ENCODE measurements at regions of chr10 and their contacts with region 1.

Region 1: DNA sequence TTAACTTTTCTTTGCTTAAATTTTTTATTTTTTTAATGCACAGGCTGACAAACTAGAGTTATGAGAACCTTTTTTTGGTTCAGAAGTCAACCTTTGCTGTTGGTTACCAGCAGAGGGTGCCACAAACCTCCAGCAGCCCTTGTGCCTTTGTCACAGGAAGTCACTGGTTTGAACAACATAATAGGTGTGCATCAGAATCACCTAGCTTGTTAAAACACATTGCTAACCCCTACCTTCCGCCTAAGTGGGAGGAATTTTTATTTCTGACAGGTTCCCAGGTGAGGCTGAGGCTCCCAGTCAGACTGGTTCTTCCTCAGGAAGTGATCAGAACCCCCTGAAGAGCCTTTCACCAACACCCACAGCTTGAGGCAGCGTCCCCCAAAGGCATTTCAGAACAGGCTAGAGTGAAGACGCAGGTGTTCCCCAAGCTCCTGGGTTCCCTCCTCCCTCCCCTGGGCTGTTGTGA is 22.6 kb upstream of the VDAC2 start:
- DNase-seq: peak; percentile 53
- H3K4me3 Mint-ChIP-seq: no peak overlapping the region
- H3K27ac Mint-ChIP-seq: peak overlapping the region; percentile 23
- H3K4me1 Mint-ChIP-seq: peaks cover 5% of the 10 kb centered on the region
- H3K27me3 Mint-ChIP-seq: no peaks in the 10 kb centered on the region

Region 2: GRCh38 chr10:75137533-75138438 is 50.2 kb before region 1 on chr10:
- intact Hi-C with region 1: loop called (anchors 5 kb)
- DNase-seq: no peak
- H3K4me3 Mint-ChIP-seq: no peak overlapping the region
- H3K27ac Mint-ChIP-seq: peak overlapping the region; percentile 20
- H3K4me1 Mint-ChIP-seq: peaks cover 27% of the 10 kb centered on the region
- H3K27me3 Mint-ChIP-seq: no peaks in the 10 kb centered on the region

Region 3: DNA sequence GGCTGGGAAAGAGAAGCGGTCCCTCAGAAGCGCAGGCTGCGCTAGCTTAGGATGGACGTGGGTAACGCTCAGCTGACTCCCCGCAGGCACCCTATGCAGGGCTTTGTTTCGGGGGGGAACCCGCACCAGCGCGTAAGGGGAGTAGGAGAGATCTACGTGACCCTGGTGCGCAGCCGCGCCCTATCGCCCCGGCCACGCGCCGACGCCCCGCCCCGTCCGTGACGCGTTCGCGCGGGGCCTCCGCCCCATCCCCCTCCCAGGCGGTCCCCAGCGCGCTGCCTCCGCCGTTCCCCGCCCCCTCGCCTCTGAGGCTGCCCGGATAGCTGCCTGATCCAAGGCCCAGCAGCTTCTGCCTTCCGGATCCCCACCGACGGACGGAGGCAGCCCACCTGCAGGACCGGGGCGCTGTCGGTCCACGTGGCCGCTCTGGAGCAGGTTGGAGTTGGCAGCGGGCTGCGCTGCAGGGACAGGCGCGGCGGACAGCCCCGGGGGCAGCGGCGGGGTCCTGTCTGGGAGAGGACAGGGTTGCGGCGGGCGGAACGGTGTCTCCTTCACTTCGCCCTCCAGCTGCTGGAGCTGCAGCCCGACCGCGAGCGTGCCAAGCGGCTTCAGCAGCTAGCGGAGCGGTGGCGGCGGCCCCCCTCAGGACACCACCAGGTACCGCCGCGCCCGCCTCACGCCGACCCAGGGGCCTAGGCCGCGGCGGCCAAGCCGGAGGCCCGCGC is 22.4 kb after region 1 on chr10 and contains the start of gene VDAC2:
- intact Hi-C with region 1: loop called (anchors 1 kb)
- DNase-seq: peak; percentile 95
- H3K4me3 Mint-ChIP-seq: peak within 1 kb of the TSS; percentile 92
- H3K27ac Mint-ChIP-seq: peak within 1 kb of the TSS; percentile 100
- H3K4me1 Mint-ChIP-seq: peaks cover 30% of the 10 kb centered on the region
- H3K27me3 Mint-ChIP-seq: no peaks in the 10 kb centered on the region
- total RNA-seq, gene VDAC2: 220 and 224 TPM in 2 replicates

Region 4: GRCh38 chr10:75294866-75295701 is 107.1 kb after region 1 on chr10:
- intact Hi-C with region 1: no loop called
- DNase-seq: peak; percentile 52
- H3K4me3 Mint-ChIP-seq: peak overlapping the region; percentile 69
- H3K27ac Mint-ChIP-seq: no peak overlapping the region
- H3K4me1 Mint-ChIP-seq: no peaks in the 10 kb centered on the region
- H3K27me3 Mint-ChIP-seq: peaks cover 22% of the 10 kb centered on the region

Region 5: DNA sequence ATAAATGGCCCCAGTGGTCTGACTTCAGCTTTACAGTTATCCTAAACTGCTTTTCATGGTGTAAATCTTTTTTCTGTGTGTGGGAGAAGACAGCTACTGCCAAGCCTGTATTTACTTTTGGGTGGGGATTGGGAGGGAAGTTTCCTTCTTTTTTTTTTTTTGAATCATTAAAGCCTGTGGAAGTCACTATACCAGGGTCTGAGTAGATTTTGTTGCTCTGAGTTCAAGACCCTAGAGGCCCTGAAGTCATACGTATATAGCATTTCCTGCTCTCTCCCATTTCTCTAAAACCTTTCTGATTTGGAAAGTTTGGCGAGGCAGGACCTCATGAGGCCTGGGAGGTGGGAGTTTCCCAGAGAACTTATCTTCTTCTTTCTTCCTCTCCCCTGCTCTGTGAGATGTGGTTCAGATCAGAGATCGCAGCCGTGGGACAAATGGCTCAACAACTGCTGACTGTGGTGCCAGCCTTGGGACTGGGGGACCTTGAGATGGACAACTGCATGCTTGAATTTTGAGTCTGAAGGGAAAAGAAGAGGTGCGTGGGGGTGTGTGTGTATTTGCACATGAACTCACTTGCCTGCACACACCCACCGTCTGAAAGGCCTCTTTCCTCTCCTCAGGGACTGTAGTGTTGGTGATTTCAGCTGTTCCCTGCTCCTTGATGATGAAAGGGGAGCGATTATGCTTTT is 261.5 kb after region 1 on chr10:
- intact Hi-C with region 1: no loop called
- DNase-seq: no peak
- H3K4me3 Mint-ChIP-seq: no peak overlapping the region
- H3K27ac Mint-ChIP-seq: no peak overlapping the region
- H3K4me1 Mint-ChIP-seq: no peaks in the 10 kb centered on the region
- H3K27me3 Mint-ChIP-seq: peaks cover 2% of the 10 kb centered on the region

Region 6: DNA sequence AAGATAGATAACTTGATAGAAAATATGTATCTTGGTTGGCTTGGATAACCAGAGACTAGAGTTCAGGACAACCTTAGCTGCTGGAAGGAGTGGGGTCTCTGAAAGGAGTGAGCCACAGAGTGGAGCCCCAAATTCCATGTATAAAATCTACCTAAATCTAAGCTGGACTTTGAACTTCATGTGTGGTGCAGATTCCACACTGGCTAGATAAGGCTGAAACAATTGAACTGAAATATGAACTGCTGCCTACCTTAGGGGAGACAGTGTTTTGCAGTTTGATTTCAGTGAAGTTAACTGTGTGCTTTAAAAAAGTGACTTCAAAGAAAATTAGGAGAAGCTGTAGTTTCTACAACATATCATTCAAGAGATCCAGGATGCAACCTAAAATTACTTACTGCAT is 367.3 kb after region 1 on chr10:
- intact Hi-C with region 1: no loop called
- DNase-seq: no peak
- H3K4me3 Mint-ChIP-seq: no peak overlapping the region
- H3K27ac Mint-ChIP-seq: no peak overlapping the region
- H3K4me1 Mint-ChIP-seq: no peaks in the 10 kb centered on the region
- H3K27me3 Mint-ChIP-seq: no peaks in the 10 kb centered on the region

Measured in activated T-helper 1 cell treated with anti-CD3 and anti-CD28 coated beads, Interleukin-12 subunit alpha, Interleukin-12 subunit beta, Interleukin-2, Interleukin-4 antibody, amounts not matched to agents 30 ng/mL and 10 ng/mL and 1 ng/mL, durations not matched to agents 14 hours and 24 hours and 36 hours (primary cell).